ENCODE measurements at regions of chr19 and their contacts with region 1.

Region 1: GRCh38 chr19:7152568-7152967 is 83.1 kb downstream of the ZNF557 start:
- DNase-seq: peak; percentile 42
- ATAC-seq: peak; percentile 60
- H3K4me3 Mint-ChIP-seq: no peak overlapping the region
- H3K27ac Mint-ChIP-seq: peak overlapping the region; percentile 19
- H3K4me1 Mint-ChIP-seq: peaks cover under 1% of the 10 kb centered on the region
- H3K27me3 Mint-ChIP-seq: no peaks in the 10 kb centered on the region

Region 2: DNA sequence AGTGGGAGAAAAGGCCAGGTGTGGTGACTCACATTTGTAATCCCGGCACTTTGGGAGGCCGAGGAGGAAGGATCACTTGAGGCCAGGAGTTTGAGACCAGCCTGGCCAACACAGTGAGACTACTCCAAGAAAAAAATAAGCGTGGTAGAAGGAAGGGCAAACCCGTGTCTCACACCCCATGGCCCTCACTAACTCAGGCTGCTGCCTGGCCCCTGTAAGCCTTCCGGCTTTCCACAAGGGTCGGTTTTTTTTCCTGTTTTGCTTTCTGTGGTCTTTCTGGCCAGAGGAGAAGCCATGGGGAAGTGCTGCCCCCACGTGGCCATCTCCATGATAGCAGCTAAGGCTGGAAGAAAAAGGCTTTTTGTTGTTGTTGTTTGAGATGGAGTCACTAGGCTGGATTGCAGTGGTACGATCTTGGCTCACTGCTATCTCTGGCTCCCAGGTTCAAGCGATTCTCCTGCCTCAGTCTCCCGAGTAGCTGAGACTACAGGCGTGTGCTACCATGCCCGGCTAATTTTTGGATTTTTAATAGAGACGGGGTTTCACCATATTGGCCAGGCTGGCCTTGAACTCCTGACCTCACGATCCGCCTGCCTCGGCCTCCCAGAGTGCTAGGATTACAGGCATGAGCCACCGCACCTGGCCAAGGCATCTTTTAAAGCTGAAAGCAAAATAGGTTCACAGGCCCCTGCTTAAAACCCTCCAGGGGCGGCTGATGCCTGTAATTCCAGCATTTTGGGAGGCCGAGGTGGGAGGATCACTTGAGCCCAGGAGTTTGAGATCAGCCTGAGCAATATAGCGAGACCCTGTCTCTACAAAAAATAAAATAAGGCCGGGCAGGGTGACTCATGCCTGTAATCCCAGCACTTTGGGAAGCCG is 188.6 kb after region 1 on chr19:
- CTCF ChIA-PET with region 1: interaction called, 33 read pairs
- DNase-seq: peak; percentile 88
- ATAC-seq: peak; percentile 18
- H3K4me3 Mint-ChIP-seq: no peak overlapping the region
- H3K27ac Mint-ChIP-seq: peak overlapping the region; percentile 80
- H3K4me1 Mint-ChIP-seq: peaks cover 62% of the 10 kb centered on the region
- H3K27me3 Mint-ChIP-seq: no peaks in the 10 kb centered on the region

Measured in activated CD8-positive, alpha-beta memory T cell treated with anti-CD3 and anti-CD28 coated beads, Interleukin-2, amount 10 ng/mL, durations not matched to agents 7 days and 5 days (primary cell).